Activated naive CD4-positive, alpha-beta T cell treated with anti-CD3 and anti-CD28 coated beads for 36 hours (primary cell): ENCODE measurements at regions of chr10 and their contacts with region 1.

Region 1: GRCh38 chr10:130127364-130128061 is 8.7 kb upstream of the GLRX3 start:
- DNase-seq: peak; percentile 73
- H3K4me3 Mint-ChIP-seq: no peak overlapping the region
- H3K27ac Mint-ChIP-seq: no peak overlapping the region
- H3K4me1 Mint-ChIP-seq: peaks cover 5% of the 10 kb centered on the region
- H3K27me3 Mint-ChIP-seq: peaks cover 26% of the 10 kb centered on the region

Region 2: GRCh38 chr10:129888784-129889616 is 238.5 kb before region 1 on chr10:
- CTCF ChIA-PET with region 1: interaction called, 11 read pairs
- intact Hi-C with region 1: loop called (anchors 1 kb)
- DNase-seq: peak; percentile 49
- H3K4me3 Mint-ChIP-seq: no peak overlapping the region
- H3K27ac Mint-ChIP-seq: no peak overlapping the region
- H3K4me1 Mint-ChIP-seq: no peaks in the 10 kb centered on the region
- H3K27me3 Mint-ChIP-seq: no peaks in the 10 kb centered on the region